Activated B cell treated with CpG ODN at 0.5 μM for 24 hours (primary cell): ENCODE measurements at regions of chr10 and their contacts with region 1.

Region 1: DNA sequence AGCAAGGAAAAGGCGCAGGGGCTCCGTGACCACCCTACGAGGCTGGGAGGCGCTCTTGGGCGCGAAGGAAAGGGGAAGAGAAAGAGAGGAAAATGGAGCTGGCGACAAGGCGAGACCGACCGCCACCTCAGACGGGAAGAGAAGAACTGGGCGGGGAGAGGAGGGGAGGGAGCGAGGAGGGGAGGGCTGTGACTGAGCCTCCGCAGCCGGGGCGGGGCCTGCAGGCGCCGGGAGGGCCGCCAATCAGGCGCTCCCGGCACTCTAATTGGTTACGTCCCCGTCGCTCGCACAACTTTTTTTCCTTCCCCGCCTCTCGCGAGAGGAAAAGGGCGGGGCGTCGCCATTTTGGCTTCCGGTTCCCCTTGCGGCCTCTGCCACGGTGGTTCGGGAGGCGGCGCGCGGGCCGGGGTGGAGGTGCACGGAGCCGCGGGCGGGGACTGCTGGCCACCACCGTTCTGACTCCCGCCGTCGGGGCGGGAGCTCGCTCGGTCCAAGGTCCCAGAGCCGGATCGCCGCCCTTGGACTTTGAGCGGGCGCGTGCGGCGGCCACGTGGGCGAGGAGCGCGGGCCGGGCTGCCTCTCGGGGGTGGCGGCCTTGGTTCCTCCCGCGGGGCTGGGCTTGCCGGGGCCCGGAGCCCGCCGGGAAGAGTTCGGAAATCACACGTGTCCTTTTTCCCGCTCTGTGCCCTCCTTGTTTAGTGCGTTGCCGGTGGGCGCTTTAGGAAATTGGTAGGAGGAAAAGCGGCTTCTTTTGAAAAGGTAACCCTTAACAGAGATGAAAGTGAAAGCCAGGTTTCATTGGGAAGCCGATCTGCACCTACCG is at the start of gene GDI2:
- DNase-seq: peak; percentile 96
- ATAC-seq: peak; percentile 82
- H3K4me3 Mint-ChIP-seq: peak within 1 kb of the TSS; percentile 91
- H3K27ac Mint-ChIP-seq: peak within 1 kb of the TSS; percentile 94
- H3K4me1 Mint-ChIP-seq: peaks cover 79% of the 10 kb centered on the region
- H3K27me3 Mint-ChIP-seq: no peaks in the 10 kb centered on the region
- CTCF ChIP-seq: no peak
- total RNA-seq, gene GDI2: 289 and 301 TPM in 2 replicates

Region 2: GRCh38 chr10:5583525-5584175 is 229.8 kb before region 1 on chr10:
- CTCF ChIA-PET with region 1: no interaction called
- POLR2A ChIA-PET with region 1: no interaction called
- intact Hi-C with region 1: no loop called
- DNase-seq: no peak
- ATAC-seq: peak; percentile 45
- H3K4me3 Mint-ChIP-seq: peak overlapping the region; percentile 58
- H3K27ac Mint-ChIP-seq: peak overlapping the region; percentile 41
- H3K4me1 Mint-ChIP-seq: peaks cover 50% of the 10 kb centered on the region
- H3K27me3 Mint-ChIP-seq: peaks cover 11% of the 10 kb centered on the region
- CTCF ChIP-seq: no peak

Region 3: DNA sequence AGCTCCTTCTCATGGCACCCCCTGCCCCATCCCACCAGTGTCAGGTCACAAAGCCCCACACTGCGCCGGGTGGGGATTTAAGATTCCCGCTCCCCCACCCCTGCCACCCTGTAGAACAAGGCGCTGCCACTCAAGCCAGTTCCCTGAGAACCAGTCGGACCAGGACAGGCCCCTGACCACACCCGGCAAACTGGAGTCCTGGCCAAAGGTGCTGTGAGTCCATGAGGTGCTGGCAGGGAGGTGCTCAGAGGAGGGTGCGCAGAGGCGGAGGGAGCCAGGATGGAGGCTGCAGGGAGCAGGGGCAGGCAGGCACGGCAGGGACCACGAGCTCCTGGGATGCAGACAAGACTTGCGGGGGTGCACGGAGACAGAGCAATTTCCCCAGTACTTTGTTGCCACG is 19.4 kb after region 1 on chr10:
- CTCF ChIA-PET with region 1: interaction called, 3 read pairs
- POLR2A ChIA-PET with region 1: interaction called, 35 read pairs
- intact Hi-C with region 1: no loop called
- DNase-seq: no peak
- ATAC-seq: no peak
- H3K4me3 Mint-ChIP-seq: no peak overlapping the region
- H3K27ac Mint-ChIP-seq: no peak overlapping the region
- H3K4me1 Mint-ChIP-seq: peaks cover 21% of the 10 kb centered on the region
- H3K27me3 Mint-ChIP-seq: no peaks in the 10 kb centered on the region
- CTCF ChIP-seq: no peak

Region 4: GRCh38 chr10:5840314-5841307 is 27.1 kb after region 1 on chr10:
- CTCF ChIA-PET with region 1: interaction called, 10 read pairs
- POLR2A ChIA-PET with region 1: interaction called, 373 read pairs
- intact Hi-C with region 1: loop called (anchors 1 kb)
- DNase-seq: peak; percentile 78
- ATAC-seq: peak; percentile 83
- H3K4me3 Mint-ChIP-seq: peak overlapping the region; percentile 84
- H3K27ac Mint-ChIP-seq: peak overlapping the region; percentile 98
- H3K4me1 Mint-ChIP-seq: peaks cover 79% of the 10 kb centered on the region
- H3K27me3 Mint-ChIP-seq: no peaks in the 10 kb centered on the region
- CTCF ChIP-seq: no peak

Region 5: DNA sequence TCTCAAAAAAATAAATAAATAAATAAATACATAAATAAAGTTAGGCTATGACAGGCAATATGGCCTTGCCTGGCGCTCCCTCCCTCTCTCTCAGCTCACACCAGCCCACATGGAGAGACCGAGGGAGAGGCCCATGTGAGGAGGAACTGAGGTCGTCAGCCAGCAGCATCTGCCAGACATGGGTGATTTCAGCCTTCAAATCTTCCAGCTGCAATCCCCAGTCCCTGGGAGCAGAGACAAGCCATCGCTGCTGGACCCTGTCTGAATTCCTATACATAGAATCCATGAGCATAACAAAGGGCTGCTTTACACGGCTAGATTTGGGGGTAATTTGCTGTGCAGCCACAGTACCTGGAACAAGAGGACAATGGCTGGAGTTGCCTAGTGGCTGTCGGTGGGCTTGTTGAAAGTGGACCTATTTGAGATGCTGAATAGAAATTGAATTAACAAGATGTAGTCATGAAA is 40.6 kb after region 1 on chr10:
- CTCF ChIA-PET with region 1: interaction called, 5 read pairs
- POLR2A ChIA-PET with region 1: interaction called, 76 read pairs
- intact Hi-C with region 1: loop called (anchors 1 kb)
- DNase-seq: no peak
- ATAC-seq: no peak
- H3K4me3 Mint-ChIP-seq: no peak overlapping the region
- H3K27ac Mint-ChIP-seq: peak overlapping the region; percentile 15
- H3K4me1 Mint-ChIP-seq: peaks cover 47% of the 10 kb centered on the region
- H3K27me3 Mint-ChIP-seq: no peaks in the 10 kb centered on the region
- CTCF ChIP-seq: no peak

Region 6: GRCh38 chr10:5862360-5862961 is 49.0 kb after region 1 on chr10:
- CTCF ChIA-PET with region 1: interaction called, 8 read pairs
- POLR2A ChIA-PET with region 1: interaction called, 46 read pairs
- intact Hi-C with region 1: no loop called
- DNase-seq: no peak
- ATAC-seq: peak; percentile 71
- H3K4me3 Mint-ChIP-seq: peak overlapping the region; percentile 61
- H3K27ac Mint-ChIP-seq: peak overlapping the region; percentile 87
- H3K4me1 Mint-ChIP-seq: peaks cover 41% of the 10 kb centered on the region
- H3K27me3 Mint-ChIP-seq: no peaks in the 10 kb centered on the region
- CTCF ChIP-seq: no peak

Region 7: DNA sequence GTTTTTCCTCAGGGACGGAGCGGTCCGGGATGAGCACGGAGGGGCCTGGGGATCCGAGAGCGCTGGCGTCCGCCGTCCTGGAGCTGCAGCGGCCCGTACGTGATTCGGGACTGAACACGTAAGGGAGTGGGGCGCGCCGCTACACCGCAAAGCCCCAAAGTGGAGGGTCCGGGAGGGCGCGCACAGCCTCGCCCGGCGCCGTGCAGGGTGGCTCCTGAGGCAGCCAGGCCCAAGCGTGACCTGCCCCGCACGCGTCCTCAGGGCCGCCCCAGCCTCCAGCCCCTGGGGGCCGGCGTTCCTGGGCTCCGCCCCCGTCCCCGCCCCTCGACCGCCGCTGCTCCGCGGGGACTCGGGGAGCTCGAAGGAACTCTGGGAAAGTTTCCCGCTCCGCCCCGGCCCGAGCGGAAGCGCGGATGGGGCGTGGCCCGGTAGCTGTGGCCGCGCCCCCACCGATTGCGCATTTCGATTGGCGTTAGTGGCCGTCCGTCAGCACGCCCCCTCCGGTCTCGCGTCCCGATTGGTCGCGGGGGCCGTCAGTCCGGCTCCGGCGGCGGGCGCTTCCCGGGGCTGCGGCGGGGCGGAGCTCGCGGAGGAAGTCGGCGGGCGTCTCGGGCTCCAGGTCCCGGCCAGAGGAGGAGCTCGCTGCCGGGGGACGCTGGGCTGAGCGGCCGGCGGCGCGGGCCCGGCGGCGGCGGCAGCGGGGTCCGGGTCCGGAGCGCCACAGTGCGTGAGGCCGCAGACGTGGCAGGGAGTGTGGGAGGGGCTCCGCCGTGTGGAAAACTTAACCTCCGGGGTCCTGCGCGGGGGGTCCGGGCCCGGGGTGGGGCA is 76.3 kb after region 1 on chr10 and contains the starts of genes ANKRD16 and FBH1:
- CTCF ChIA-PET with region 1: interaction called, 8 read pairs
- POLR2A ChIA-PET with region 1: interaction called, 173 read pairs
- intact Hi-C with region 1: loop called (anchors 1 kb)
- DNase-seq: peak; percentile 100
- ATAC-seq: peak; percentile 85
- H3K4me3 Mint-ChIP-seq: peak within 1 kb of the TSS; percentile 87
- H3K27ac Mint-ChIP-seq: peak within 1 kb of the TSS; percentile 78
- H3K4me1 Mint-ChIP-seq: peaks cover 59% of the 10 kb centered on the region
- H3K27me3 Mint-ChIP-seq: no peaks in the 10 kb centered on the region
- CTCF ChIP-seq: no peak
- total RNA-seq, gene ANKRD16: 9.2 and 11.1 TPM in 2 replicates
- total RNA-seq, gene FBH1: 65.5 and 68.7 TPM in 2 replicates

Region 8: GRCh38 chr10:6445501-6446316 is 632.2 kb after region 1 on chr10:
- CTCF ChIA-PET with region 1: no interaction called
- POLR2A ChIA-PET with region 1: no interaction called
- intact Hi-C with region 1: no loop called
- DNase-seq: no peak
- ATAC-seq: no peak
- H3K4me3 Mint-ChIP-seq: no peak overlapping the region
- H3K27ac Mint-ChIP-seq: no peak overlapping the region
- H3K4me1 Mint-ChIP-seq: peaks cover 2% of the 10 kb centered on the region
- H3K27me3 Mint-ChIP-seq: peaks cover 12% of the 10 kb centered on the region
- CTCF ChIP-seq: no peak